MCF 10A (cell line): ENCODE measurements at regions of chr2 and their contacts with region 1.

Region 1: DNA sequence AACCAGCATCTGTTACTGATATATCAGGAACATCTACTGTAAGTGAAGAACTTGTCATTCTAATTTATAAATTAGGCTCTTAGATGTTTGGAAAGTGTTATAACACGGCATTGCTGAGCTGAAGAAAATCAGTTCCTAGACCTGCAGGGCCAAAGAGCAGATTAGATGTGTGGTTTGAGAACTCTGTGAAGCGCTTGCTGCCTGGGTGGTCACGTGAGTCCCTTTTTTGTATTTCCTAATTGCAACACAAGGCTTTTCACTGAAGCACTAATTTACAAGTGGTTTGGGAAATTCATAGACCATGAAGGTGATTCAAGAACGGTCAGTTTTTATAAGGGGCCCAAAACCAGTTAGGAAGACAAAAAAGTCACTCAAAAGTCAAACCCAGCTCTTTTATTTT is 106.9 kb upstream of the SP3 start:
- DNase-seq: no peak
- H3K4me3 Mint-ChIP-seq: no peak overlapping the region
- H3K27ac Mint-ChIP-seq: no peak overlapping the region
- H3K4me1 Mint-ChIP-seq: no peaks in the 10 kb centered on the region
- H3K27me3 Mint-ChIP-seq: no peaks in the 10 kb centered on the region
- CTCF ChIP-seq: no peak

Region 2: DNA sequence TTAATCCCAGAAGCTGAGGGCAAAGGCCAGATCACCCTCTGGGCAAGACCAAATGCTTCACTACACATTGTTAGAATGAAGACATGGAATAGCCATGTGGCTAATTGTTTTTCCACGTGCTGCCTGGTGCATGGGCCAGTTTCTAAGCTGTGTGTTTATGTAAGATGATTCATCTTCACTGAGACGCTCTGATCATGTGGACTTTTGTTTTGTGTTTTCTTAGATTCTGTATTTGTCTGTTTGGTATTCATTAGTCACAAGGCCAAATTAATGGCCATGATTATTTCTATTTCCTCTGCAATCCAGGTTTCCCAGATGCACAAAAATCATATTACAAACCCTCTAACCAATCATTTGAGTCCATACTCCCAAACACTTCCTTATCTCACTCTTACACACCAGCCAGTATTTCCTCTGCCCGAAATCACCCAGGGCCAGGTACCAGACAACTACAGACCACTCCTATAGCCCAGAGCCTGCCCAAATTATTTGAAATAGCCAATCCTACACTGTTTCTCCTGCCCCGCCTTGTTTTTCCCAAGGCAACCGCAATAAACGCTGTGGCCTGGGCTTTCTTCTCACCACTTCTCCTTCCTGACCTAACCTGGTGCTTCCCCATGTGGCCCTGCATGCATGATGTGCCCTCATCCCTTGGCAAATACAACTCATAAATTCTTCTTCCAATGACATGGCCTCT is 12.7 kb before region 1 on chr2:
- CTCF ChIA-PET with region 1: interaction called, 6 read pairs
- POLR2A ChIA-PET with region 1: interaction called, 18 read pairs
- intact Hi-C with region 1: no loop called
- DNase-seq: peak; percentile 58
- H3K4me3 Mint-ChIP-seq: no peak overlapping the region
- H3K27ac Mint-ChIP-seq: peak overlapping the region; percentile 92
- H3K4me1 Mint-ChIP-seq: peaks cover 34% of the 10 kb centered on the region
- H3K27me3 Mint-ChIP-seq: no peaks in the 10 kb centered on the region
- CTCF ChIP-seq: no peak

Region 3: GRCh38 chr2:174376967-174377366 is 304.9 kb after region 1 on chr2:
- CTCF ChIA-PET with region 1: no interaction called
- POLR2A ChIA-PET with region 1: no interaction called
- intact Hi-C with region 1: no loop called
- DNase-seq: peak; percentile 9
- H3K4me3 Mint-ChIP-seq: no peak overlapping the region
- H3K27ac Mint-ChIP-seq: no peak overlapping the region
- H3K4me1 Mint-ChIP-seq: no peaks in the 10 kb centered on the region
- H3K27me3 Mint-ChIP-seq: no peaks in the 10 kb centered on the region
- CTCF ChIP-seq: no peak